PC-9 (cell line): ENCODE measurements at regions of chr3 and their contacts with region 1.

Region 1: DNA sequence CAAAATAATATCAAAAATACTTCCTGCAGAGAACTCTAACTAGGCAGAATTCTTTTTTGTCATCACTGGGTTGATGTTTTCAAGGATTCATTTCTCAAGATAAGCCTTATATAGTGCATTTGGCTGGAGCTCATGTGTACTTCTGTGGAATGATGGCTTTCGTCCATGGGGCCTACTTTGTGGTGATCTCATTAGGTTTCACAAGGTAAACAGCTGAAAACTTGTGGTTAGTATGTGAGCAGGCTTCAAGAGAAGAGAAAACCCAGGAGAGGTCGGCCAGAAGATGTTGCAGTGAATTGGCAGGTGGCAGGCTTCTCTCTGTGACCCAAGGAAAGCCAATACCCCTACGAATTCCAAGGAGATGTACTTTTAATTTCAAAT is 121.4 kb upstream of the PHLDB2 start:
- DNase-seq: peak; percentile 51 to 77
- H3K4me3 ChIP-seq: no peak overlapping the region
- H3K27ac ChIP-seq: peak overlapping the region; percentile 91
- H3K4me1 ChIP-seq: peaks cover 73% of the 10 kb centered on the region
- H3K27me3 ChIP-seq: no peaks in the 10 kb centered on the region
- CTCF ChIP-seq: no peak

Region 2: GRCh38 chr3:109927161-109927560 is 1810.5 kb before region 1 on chr3:
- CTCF ChIA-PET with region 1: no interaction called
- POLR2A ChIA-PET with region 1: no interaction called
- intact Hi-C with region 1: loop called (anchors 5 kb)
- DNase-seq: peak; percentile 71 to 98
- H3K4me3 ChIP-seq: no peak overlapping the region
- H3K27ac ChIP-seq: peak overlapping the region; percentile 93
- H3K4me1 ChIP-seq: peaks cover 32% of the 10 kb centered on the region
- H3K27me3 ChIP-seq: no peaks in the 10 kb centered on the region
- CTCF ChIP-seq: no peak

Region 3: GRCh38 chr3:111717601-111718000 is 20.1 kb before region 1 on chr3:
- CTCF ChIA-PET with region 1: interaction called, 5 read pairs
- POLR2A ChIA-PET with region 1: interaction called, 3 read pairs
- intact Hi-C with region 1: loop called (anchors 1 kb)
- DNase-seq: peak; percentile 84 to 98
- H3K4me3 ChIP-seq: no peak overlapping the region
- H3K27ac ChIP-seq: peak overlapping the region; percentile 34
- H3K4me1 ChIP-seq: peaks cover 25% of the 10 kb centered on the region
- H3K27me3 ChIP-seq: no peaks in the 10 kb centered on the region
- CTCF ChIP-seq: peak; percentile 100

Region 4: DNA sequence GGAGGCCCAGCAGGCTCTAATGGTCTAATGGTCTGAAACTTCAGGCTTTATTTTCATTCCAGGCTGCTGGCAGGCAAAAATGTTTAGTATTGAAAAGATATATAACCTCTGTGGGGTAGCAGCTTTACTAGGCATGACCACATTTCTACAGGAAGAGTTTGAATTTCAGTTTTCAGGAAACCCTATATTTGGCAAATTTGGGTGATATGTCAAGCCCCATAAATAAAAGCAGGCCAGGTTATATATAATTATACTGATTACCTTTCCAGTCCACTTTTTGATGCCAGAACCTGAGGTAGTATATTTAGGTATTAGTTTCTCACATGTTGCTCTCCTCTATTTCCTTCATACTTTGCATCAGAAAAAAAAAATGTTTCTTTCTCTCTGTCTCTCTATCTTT is 84.2 kb after region 1 on chr3:
- CTCF ChIA-PET with region 1: interaction called, 16 read pairs
- POLR2A ChIA-PET with region 1: no interaction called
- intact Hi-C with region 1: no loop called
- DNase-seq: no peak
- H3K4me3 ChIP-seq: no peak overlapping the region
- H3K27ac ChIP-seq: no peak overlapping the region
- H3K4me1 ChIP-seq: no peaks in the 10 kb centered on the region
- H3K27me3 ChIP-seq: no peaks in the 10 kb centered on the region
- CTCF ChIP-seq: no peak

Region 5: GRCh38 chr3:111904376-111905241 is 166.9 kb after region 1 on chr3:
- CTCF ChIA-PET with region 1: no interaction called
- POLR2A ChIA-PET with region 1: interaction called, 4 read pairs
- intact Hi-C with region 1: loop called (anchors 1 kb)
- DNase-seq: peak; percentile 47 to 99
- H3K4me3 ChIP-seq: no peak overlapping the region; the same call in 1 of the 2 replicates
- H3K27ac ChIP-seq: peak overlapping the region; percentile 96
- H3K4me1 ChIP-seq: peaks cover 55% of the 10 kb centered on the region
- H3K27me3 ChIP-seq: no peaks in the 10 kb centered on the region
- CTCF ChIP-seq: peak; percentile 30

Region 6: GRCh38 chr3:111924283-111924682 is 186.6 kb after region 1 on chr3:
- CTCF ChIA-PET with region 1: no interaction called
- POLR2A ChIA-PET with region 1: interaction called, 7 read pairs
- intact Hi-C with region 1: loop called (anchors 5 kb)
- DNase-seq: peak in 1 of 2 experiments; percentile 60
- H3K4me3 ChIP-seq: 0 out of 2 replicates have a peak overlapping the region, but pooled peaks have one; percentile 1
- H3K27ac ChIP-seq: peak overlapping the region; percentile 96
- H3K4me1 ChIP-seq: peaks cover 52% of the 10 kb centered on the region
- H3K27me3 ChIP-seq: no peaks in the 10 kb centered on the region
- CTCF ChIP-seq: no peak

Region 7: DNA sequence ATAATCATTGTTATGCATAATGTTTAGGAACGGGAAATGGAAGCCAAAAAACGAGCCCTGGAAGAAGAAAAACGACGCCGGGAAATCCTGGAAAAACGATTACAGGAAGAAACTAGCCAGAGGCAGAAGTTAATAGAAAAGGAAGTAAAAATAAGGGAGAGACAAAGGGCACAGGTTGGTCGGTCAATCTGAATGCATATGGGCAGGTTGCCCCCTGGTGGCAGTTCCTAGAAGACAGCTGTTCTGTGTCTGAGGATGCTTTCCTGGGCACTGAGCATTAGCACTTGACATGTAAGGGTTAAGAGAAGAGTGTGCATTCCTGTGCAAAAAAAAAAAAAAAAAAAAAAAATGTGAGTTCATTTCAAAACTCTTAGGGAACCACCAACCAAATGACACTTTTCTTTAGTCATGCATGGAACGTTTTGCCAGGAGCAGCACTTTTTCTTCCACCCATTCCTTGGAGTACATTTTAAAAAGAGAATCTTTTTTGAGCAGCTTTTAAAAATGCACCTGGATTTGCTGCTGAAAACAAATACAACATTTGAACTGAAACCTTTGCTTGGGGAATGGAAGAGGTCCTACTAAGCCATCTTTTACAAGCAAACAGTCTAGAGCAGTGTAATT is 230.1 kb after region 1 on chr3:
- CTCF ChIA-PET with region 1: interaction called, 4 read pairs
- POLR2A ChIA-PET with region 1: no interaction called
- intact Hi-C with region 1: loop called (anchors 1 kb)
- DNase-seq: peak; percentile 71 to 85
- H3K4me3 ChIP-seq: no peak overlapping the region
- H3K27ac ChIP-seq: peak overlapping the region; percentile 54
- H3K4me1 ChIP-seq: peaks cover 25% of the 10 kb centered on the region
- H3K27me3 ChIP-seq: no peaks in the 10 kb centered on the region
- CTCF ChIP-seq: peak; percentile 99